Adrenal gland (tissue), 19 donors: ENCODE measurements at regions of chr3 and their contacts with region 1.

Region 1: GRCh38 chr3:181660337-181660736 is 51.4 kb upstream of the SOX2 start:
- DNase-seq: no peak
- H3K4me3 ChIP-seq: no peak overlapping the region
- H3K27ac ChIP-seq: no peak overlapping the region
- H3K4me1 ChIP-seq: no peaks in the 10 kb centered on the region
- H3K27me3 ChIP-seq: no peaks in the 10 kb centered on the region
- CTCF ChIP-seq: no peak
- POLR2A ChIP-seq: no peak

Region 2: GRCh38 chr3:181631901-181632300 is 28.4 kb before region 1 on chr3:
- intact Hi-C with region 1: loop called in 1 of 2 experiments (anchors 2 kb)
- DNase-seq: no peak
- H3K4me3 ChIP-seq: no peak overlapping the region
- H3K27ac ChIP-seq: no peak overlapping the region
- H3K4me1 ChIP-seq: peaks cover 0 to 5% of the 10 kb centered on the region in 2 donors
- H3K27me3 ChIP-seq: no peaks in the 10 kb centered on the region
- CTCF ChIP-seq: no peak
- POLR2A ChIP-seq: no peak

Region 3: DNA sequence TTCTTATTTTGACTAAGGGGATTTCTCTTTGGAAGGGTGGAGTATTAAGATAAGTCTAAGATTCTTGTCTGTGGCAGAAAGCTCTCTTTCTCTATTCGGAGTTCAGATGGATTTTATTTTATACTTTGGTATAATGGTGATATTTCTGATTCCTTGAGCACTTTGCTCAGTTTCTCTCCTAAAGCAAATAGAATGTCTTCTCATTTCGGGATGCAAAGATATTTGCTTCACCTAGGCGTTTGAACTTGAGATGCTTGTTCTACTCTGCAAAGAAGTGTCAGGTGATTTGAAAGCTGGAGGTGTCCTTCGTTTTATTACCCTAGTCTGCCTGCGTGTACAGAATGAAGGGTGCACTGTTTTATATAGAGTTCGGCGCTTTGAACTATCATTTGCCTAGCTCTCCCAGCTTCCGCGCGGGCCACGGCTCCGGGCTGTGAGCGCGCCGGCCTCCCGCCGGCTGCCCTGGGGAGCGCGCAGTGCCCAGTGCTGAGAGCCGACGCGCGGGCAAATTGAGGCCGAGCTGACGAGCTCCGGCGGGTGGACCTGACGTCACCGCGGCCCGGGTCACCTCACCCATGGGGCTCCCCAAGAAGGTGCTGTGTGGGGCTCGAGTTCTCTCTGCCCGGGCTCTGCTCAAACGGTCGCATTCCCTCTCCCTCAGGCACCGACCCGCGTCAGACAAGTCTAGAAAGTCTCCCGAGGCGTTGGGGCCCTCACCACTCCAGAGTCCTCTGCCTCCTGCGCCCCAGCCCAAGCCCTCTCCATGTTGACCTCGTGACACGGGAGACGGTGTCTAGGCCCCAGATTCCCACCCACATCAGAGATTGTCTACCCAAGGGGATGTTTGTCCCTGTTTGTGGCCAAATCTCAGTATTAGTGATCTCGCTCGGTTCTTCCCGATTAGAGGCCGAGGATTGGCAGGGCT is 58.9 kb after region 1 on chr3:
- intact Hi-C with region 1: no loop called
- DNase-seq: no peak
- H3K4me3 ChIP-seq: no peak overlapping the region
- H3K27ac ChIP-seq: no peak overlapping the region
- H3K4me1 ChIP-seq: no peaks in the 10 kb centered on the region
- H3K27me3 ChIP-seq: peaks cover 95% of the 10 kb centered on the region
- CTCF ChIP-seq: no peak
- POLR2A ChIP-seq: no peak

Region 4: DNA sequence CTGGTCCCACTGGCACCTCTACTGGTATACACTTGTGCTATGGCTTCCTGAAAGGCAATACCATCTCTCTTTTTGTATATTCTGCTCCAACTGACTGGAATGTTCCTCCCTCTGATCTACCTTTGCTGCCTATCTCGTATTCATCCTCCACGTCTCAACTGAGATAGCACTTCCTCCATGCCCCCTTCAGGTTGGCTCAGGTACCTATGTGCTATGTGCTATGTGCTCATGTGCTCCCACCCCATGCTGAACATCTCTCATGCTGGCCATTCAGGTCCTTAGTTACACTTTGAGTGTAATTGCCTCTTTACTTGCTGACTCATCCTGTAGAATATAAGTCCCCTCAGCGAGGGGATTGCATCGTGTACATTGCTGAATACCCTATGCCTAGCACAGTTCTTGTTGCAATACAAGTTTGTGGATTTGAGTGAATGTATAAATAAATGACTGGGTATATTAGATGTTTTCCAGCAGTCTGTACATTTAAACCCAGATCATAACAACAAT is 208.3 kb after region 1 on chr3:
- intact Hi-C with region 1: no loop called
- DNase-seq: no peak
- H3K4me3 ChIP-seq: no peak overlapping the region
- H3K27ac ChIP-seq: no peak overlapping the region
- H3K4me1 ChIP-seq: no peaks in the 10 kb centered on the region
- H3K27me3 ChIP-seq: peaks cover 6% of the 10 kb centered on the region
- CTCF ChIP-seq: no peak
- POLR2A ChIP-seq: no peak